Posterior cingulate gyrus (tissue), 11 donors: ENCODE measurements at regions of chr5 and their contacts with region 1.

Region 1: DNA sequence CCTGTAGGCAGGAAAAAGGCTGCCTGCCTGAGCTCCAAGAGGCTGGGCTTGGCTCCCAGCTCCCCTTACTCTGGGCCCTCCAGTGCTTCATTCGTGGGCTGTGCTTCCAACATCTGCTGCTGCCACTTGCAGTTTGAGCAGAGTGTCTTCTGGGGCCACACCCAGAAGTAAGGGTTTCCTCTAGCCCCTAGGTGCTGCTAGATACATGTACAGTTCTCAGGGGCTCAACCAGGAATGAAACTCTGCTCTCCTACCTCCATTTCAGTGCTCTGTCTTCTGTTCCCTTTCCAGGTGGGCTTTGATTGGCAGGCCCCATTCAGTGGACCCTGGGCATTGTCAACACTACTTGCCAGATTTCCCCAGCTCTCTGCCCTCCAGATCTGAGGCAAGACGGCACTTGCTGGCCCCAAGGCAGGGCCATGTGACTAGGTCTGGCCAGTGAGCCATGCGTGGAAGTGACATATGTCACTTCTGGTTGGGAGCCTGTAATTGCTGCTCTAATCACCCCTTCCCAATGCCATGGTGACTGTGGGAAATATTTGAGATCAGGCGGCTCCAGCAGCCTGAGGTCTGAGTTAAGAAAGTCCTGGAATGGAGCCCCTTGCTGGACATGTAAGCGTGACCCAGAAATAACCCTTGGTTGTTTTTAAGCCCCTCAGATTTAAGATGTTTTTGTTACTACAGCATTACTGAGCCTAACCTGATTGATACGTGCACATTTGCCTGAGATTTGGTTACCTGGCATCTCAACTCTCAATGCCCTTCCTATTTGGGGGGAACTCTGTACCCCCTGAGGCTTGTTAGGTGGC is 9.4 kb upstream of the BOD1 start:
- DNase-seq: no peak

Region 2: GRCh38 chr5:173764321-173765029 is 138.6 kb after region 1 on chr5:
- intact Hi-C with region 1: loop called (anchors 10 kb)
- DNase-seq: peak in 4 of 10 donors; percentile 31 to 92 (median 52)